SK-N-SH (cell line): ENCODE measurements at regions of chr7 and their contacts with region 1.

Region 1: DNA sequence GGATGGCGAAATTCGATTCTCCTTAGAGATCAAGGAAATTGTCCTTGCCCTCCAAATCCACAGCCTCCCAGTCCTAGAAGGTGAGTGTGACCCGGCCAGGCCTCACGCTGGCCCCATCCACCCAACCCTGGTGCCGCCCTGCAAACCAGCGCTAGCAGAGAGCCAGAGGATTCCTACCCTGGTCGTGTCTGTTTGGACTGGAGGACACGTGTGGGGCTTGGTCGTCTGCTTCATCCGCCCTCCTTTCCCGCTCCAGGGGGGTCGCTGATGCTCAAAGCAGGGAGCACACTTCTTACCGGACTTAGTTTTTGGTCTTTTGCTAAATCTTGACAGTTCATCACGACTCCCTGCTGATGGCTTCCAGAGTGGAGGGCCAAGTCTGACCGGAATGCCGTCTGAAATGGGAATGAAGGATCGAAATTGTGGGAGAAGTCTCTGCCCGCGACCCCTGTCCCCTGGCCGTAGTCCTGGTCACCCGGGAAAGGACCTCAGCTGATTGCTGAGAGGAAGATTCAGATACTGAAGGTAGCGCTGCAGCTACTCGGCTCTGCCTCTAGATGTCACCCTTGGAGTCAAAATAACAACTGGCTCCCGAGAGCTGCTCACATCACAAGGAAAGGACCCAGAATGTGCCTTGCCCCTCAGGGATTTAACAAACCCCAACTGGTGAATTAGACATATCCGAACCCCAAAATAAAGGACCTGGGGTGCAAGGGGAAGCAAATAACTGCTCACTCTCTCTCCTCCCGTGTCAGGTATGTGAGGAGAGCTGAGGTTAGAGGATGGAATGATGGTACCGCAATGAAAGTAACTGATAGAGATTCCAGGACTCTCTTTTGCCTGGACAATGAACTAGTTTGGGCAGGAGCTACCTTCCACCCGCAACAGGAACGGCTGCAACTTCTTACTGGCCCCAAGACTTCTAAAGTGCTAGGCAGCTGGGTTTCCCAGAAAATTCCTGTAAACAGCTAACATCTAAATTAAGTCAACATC is 23.5 kb upstream of the ORC5 start:
- DNase-seq: peak; percentile 79
- H3K4me3 ChIP-seq: no peak overlapping the region; a peak in 2 of 4 replicates
- H3K27ac ChIP-seq: no peak overlapping the region
- H3K4me1 ChIP-seq: peaks cover 0 to 13% of the 10 kb centered on the region in 2 experiments; a peak in 1 of 4 replicates
- H3K27me3 ChIP-seq: peaks cover 13% of the 10 kb centered on the region; the same call in 1 of the 2 replicates
- CTCF ChIP-seq: peak; percentile 94
- EP300 ChIP-seq: no peak
- RAD21 ChIP-seq: peak; percentile 91

Region 2: GRCh38 chr7:104207731-104208420 is 23.5 kb before region 1 on chr7 and contains the start of gene ORC5:
- CTCF ChIA-PET with region 1: interaction called, 12 read pairs
- POLR2A ChIA-PET with region 1: no interaction called
- DNase-seq: peak; percentile 96
- H3K4me3 ChIP-seq: peak within 1 kb of the TSS; percentile 90 to 100
- H3K27ac ChIP-seq: peak within 1 kb of the TSS; percentile 59 to 91
- H3K4me1 ChIP-seq: peaks cover 0 to 14% of the 10 kb centered on the region in 2 experiments; a peak in 2 of 4 replicates
- H3K27me3 ChIP-seq: no peaks in the 10 kb centered on the region
- CTCF ChIP-seq: no peak
- EP300 ChIP-seq: no peak
- RAD21 ChIP-seq: no peak; the same call in 1 of the 2 replicates
- polyA plus RNA-seq, gene ORC5: 4.1 and 4.7 TPM in 2 replicates

Region 3: GRCh38 chr7:104267701-104268368 is 36.5 kb after region 1 on chr7:
- CTCF ChIA-PET with region 1: interaction called, 89 read pairs
- POLR2A ChIA-PET with region 1: no interaction called
- DNase-seq: peak; percentile 36
- H3K4me3 ChIP-seq: no peak overlapping the region
- H3K27ac ChIP-seq: no peak overlapping the region
- H3K4me1 ChIP-seq: no peaks in the 10 kb centered on the region
- H3K27me3 ChIP-seq: 0 out of 2 replicates have a peak, but pooled peaks cover 5% of the 10 kb centered on the region
- CTCF ChIP-seq: peak; percentile 79
- EP300 ChIP-seq: no peak
- RAD21 ChIP-seq: peak; percentile 59

Region 4: DNA sequence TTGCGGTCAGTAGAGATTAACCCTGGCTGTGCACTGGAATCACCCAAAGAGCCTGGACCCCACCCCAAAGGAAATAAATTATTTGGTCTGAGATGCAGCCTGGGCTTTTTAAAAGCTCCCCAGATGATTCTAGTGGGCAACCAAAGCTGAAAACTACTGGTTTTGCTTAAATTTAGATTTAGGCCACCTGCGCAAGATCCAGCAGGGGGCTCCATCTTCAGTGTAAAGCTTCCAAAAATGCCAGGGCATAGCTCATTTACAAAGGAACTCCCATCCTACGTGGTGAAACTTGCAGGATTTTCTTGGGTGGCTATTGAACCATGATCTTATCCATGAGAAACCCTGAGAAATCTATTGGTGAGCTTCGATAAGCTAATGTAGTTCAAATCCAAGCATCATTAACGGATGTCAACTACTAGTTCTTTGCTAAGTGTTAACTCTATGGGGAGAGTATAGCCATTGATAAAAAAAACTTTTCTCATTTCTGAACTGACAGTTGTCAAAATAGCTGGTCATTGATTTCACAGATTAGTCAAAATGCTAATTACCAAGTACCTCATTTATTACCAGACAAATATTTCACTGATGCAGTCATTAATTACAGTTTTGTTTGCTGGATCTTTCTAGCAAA is 412.4 kb after region 1 on chr7:
- CTCF ChIA-PET with region 1: interaction called, 16 read pairs
- POLR2A ChIA-PET with region 1: no interaction called
- DNase-seq: peak; percentile 49
- H3K4me3 ChIP-seq: no peak overlapping the region
- H3K27ac ChIP-seq: no peak overlapping the region
- H3K4me1 ChIP-seq: peaks cover 0 to 2% of the 10 kb centered on the region in 2 experiments; a peak in 1 of 4 replicates
- H3K27me3 ChIP-seq: no peaks in the 10 kb centered on the region; the same call in 1 of the 2 replicates
- CTCF ChIP-seq: peak; percentile 81
- EP300 ChIP-seq: no peak
- RAD21 ChIP-seq: peak; percentile 62

Region 5: GRCh38 chr7:104883718-104884452 is 652.5 kb after region 1 on chr7:
- CTCF ChIA-PET with region 1: interaction called, 23 read pairs
- POLR2A ChIA-PET with region 1: no interaction called
- DNase-seq: peak; percentile 84
- H3K4me3 ChIP-seq: no peak overlapping the region
- H3K27ac ChIP-seq: no peak overlapping the region
- H3K4me1 ChIP-seq: no peaks in the 10 kb centered on the region; a peak in 1 of 4 replicates
- H3K27me3 ChIP-seq: peaks cover 26% of the 10 kb centered on the region; the same call in 1 of the 2 replicates
- CTCF ChIP-seq: peak; percentile 99
- EP300 ChIP-seq: no peak
- RAD21 ChIP-seq: peak; percentile 84